Activated CD4-positive, alpha-beta T cell treated with anti-CD3 and anti-CD28 coated beads, Interleukin-2, amount 10 ng/mL, durations not matched to agents 7 days and 5 days (primary cell): ENCODE measurements at regions of chr19 and their contacts with region 1.

Region 1: DNA sequence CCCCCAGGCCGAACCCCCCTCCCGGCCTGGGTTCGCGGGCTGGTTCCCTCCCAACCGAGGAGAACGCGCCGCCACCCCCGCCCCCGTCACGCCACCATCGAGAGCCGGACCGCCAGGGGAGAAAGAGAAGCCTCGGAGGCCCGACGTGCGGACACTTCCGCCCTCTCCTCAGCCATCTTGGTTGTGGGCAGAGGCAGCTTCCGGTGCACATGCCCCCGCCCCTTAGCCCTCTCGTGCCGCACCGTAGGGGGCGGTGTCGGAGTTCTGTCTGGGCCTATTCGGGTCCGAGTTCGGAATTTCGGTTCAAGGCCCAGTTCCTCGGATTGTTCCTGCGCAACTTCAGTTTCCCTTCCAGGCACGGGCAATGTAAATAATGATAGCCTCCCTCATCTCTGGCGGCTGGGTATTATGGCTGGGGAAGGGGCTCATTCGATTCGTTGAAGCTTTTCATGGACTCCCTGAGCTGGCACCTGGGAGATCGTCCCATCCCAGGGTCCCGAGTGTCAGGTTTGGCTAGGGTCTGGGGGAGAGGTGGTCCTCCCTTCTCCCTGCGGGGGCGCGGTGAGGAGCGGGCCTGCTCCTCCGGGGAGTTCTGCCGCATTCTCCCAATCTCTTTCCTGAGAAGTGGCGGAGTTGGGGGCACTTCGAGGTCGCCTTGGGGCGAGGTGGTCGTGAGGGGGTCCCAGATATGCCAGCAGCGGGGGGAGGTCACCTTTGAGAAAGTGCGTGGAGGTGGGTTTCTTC is at the starts of genes IER2 and STX10:
- DNase-seq: peak; percentile 95
- H3K4me3 Mint-ChIP-seq: peak within 1 kb of the TSS; percentile 97
- H3K27ac Mint-ChIP-seq: peak within 1 kb of the TSS; percentile 91
- H3K4me1 Mint-ChIP-seq: peaks cover 19% of the 10 kb centered on the region
- H3K27me3 Mint-ChIP-seq: no peaks in the 10 kb centered on the region
- total RNA-seq, gene IER2: 167 to 188 TPM
- total RNA-seq, gene STX10: 62.3 to 65.0 TPM

Region 2: GRCh38 chr19:13036366-13036976 is 113.9 kb before region 1 on chr19:
- CTCF ChIA-PET with region 1: no interaction called
- POLR2A ChIA-PET with region 1: no interaction called
- DNase-seq: no peak
- H3K4me3 Mint-ChIP-seq: no peak overlapping the region
- H3K27ac Mint-ChIP-seq: no peak overlapping the region
- H3K4me1 Mint-ChIP-seq: no peaks in the 10 kb centered on the region
- H3K27me3 Mint-ChIP-seq: no peaks in the 10 kb centered on the region

Region 3: DNA sequence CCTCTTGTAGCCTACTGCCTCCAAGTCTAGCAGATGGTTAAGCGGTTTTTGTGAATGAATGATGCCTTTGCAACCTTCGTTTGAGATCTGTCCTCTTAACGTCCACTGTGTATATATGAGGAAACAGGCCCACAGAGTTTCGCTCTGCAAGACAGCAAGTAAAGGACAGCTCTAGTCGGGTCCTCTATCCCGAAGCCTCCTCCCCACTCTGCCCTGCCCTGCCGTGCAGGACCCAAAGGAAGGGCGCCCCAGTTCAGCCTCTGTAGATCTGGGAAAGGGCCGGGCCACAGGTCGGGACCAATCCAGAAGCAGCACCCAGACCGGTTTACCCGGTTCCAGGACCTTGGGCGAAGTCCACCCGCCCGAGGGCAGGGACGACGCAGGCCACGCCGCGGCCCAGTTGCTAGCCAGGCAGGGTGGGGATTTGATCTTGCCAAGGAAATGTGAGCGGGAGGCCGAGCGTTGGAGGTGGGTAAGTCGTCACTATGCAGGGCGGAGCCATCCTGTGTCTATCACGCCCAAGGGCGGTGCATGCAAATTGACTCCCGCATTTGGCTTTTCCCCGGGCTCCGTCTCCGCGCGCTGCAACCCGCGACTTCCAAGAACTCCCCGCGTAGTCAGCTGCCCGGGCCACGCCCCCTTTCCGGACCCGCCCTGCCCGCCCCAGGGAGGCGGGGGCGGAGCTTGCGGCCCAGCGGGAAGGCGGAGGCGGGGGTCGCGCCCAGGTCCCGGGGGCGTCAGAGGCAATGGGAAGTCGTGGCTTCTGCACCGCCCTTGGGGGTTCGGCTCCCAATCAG is 12.4 kb after region 1 on chr19:
- CTCF ChIA-PET with region 1: interaction called, 11 read pairs
- POLR2A ChIA-PET with region 1: interaction called, 7 read pairs
- DNase-seq: peak; percentile 94
- H3K4me3 Mint-ChIP-seq: peak overlapping the region; percentile 91
- H3K27ac Mint-ChIP-seq: peak overlapping the region; percentile 98
- H3K4me1 Mint-ChIP-seq: peaks cover 68% of the 10 kb centered on the region
- H3K27me3 Mint-ChIP-seq: no peaks in the 10 kb centered on the region

Region 4: DNA sequence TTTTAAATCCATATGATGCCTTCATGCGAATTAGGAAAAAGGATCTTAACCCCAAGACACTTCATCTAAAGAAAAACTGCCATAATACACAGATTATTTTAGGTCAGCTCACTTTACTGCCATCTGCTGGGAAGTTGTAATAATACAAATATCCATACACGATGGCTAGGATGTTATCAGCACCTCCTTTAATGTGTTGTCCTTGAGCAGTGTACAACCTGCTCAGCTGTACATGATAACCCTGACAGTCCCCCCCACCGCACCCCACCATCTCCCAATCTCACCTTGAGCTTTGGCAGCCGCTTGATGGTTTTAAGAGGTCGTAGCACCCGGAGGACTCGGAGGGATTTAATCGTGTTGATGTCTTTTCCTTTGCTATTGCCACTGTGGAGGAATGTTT is 112.1 kb after region 1 on chr19:
- CTCF ChIA-PET with region 1: no interaction called
- POLR2A ChIA-PET with region 1: interaction called, 14 read pairs
- DNase-seq: peak; percentile 28
- H3K4me3 Mint-ChIP-seq: no peak overlapping the region
- H3K27ac Mint-ChIP-seq: no peak overlapping the region
- H3K4me1 Mint-ChIP-seq: peaks cover 13% of the 10 kb centered on the region
- H3K27me3 Mint-ChIP-seq: peaks cover 21% of the 10 kb centered on the region

Region 5: DNA sequence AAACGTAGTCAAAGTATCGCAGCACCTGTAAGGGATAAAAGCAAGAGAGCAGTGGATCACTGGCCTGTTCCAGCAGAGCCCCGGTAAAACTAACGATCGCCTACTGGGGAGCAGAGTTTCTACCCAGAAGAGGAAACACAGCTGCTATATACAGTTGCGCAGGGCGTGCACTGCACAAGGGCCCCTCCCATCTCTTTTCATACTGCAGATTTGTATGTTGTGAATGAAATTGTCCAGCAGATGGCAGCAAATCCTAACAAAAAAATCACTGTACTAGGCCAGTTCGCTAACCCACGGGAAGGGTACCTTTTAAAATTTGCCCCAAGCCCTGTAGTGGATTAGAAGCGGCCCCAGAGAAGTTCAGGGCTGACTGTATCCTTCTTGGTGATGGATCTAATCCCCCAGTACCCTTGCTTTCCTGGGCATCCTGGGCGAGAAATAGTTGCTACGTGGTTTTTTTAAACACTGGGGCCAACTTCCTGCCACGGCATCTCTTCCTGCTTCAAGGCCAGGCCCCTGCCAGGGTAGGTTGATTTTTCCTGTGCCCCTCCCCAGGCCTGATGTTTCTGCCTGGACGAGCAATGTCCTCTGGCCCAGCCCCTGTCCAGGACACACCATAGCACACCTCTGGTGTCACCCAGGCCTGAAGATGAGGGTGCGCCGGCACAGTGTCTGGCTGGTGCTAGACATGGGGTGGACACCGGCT is 126.9 kb after region 1 on chr19:
- CTCF ChIA-PET with region 1: no interaction called
- POLR2A ChIA-PET with region 1: no interaction called
- DNase-seq: peak; percentile 85
- H3K4me3 Mint-ChIP-seq: peak overlapping the region; percentile 55
- H3K27ac Mint-ChIP-seq: peak overlapping the region; percentile 95
- H3K4me1 Mint-ChIP-seq: peaks cover 25% of the 10 kb centered on the region
- H3K27me3 Mint-ChIP-seq: peaks cover 5% of the 10 kb centered on the region